Activated CD4-positive, alpha-beta T cell treated with anti-CD3 and anti-CD28 coated beads for 36 hours (primary cell): ENCODE measurements at regions of chr1 and their contacts with region 1.

Region 1: GRCh38 chr1:16677552-16678431 is 11.0 kb upstream of the RNU1-3 start:
- DNase-seq: peak; percentile 77
- ATAC-seq: peak; percentile 94
- H3K4me3 Mint-ChIP-seq: peak overlapping the region; percentile 50
- H3K27ac Mint-ChIP-seq: peak overlapping the region; percentile 58
- H3K4me1 Mint-ChIP-seq: peaks cover 26% of the 10 kb centered on the region
- H3K27me3 Mint-ChIP-seq: peaks cover 29% of the 10 kb centered on the region

Region 2: DNA sequence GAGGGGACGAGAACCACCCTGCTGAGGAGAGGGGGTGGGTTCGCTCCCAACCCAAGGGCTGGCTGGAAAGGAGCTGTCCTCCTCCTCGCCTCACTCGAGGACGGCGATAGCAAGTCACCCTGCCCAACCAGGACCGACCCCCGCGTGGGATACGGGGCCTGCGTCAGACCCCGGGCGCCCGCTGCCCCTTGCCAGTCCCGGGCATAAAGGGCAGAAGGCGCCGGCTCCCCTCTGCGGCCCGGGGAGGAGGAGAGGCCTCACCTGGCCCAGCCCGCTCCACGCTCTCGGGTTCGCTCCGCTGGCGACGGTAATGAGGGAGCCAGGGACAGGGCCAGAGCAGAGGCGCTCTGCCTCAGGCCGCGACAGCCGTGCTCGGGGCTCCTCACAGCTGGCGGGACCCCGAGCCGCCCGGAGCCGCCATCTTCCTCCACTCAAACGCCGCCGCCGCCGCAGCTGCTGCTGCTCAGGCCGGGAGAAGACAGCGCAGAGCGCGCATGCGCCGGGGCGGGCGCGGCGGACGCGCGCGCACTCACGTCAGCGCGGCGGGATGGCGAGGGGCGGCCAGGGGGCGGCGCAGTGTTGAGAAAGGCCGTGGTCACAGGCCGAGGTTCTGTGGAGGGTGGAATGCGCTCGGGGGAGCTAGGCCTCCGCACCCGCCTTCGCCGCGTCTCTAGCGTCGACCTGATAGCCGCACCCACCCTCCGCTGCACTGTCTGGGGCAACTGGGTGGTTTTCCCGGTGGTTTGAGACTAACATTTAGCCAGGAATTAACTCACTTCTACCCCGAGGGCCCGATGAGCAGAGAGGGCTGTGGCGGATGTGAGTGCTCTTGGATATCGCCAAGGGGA is 325.6 kb before region 1 on chr1 and contains the start of gene FBXO42:
- CTCF ChIA-PET with region 1: no interaction called
- POLR2A ChIA-PET with region 1: no interaction called
- intact Hi-C with region 1: no loop called
- DNase-seq: peak; percentile 95
- ATAC-seq: peak; percentile 92
- H3K4me3 Mint-ChIP-seq: peak within 1 kb of the TSS; percentile 96
- H3K27ac Mint-ChIP-seq: peak within 1 kb of the TSS; percentile 96
- H3K4me1 Mint-ChIP-seq: peaks cover 31% of the 10 kb centered on the region
- H3K27me3 Mint-ChIP-seq: no peaks in the 10 kb centered on the region
- total RNA-seq, gene FBXO42: 14.3 to 18.1 TPM

Region 3: GRCh38 chr1:16727190-16728111 is 49.7 kb after region 1 on chr1:
- CTCF ChIA-PET with region 1: no interaction called
- POLR2A ChIA-PET with region 1: no interaction called
- intact Hi-C with region 1: loop called in 1 of 2 experiments (anchors 10 kb)
- DNase-seq: peak; percentile 87
- ATAC-seq: peak; percentile 90
- H3K4me3 Mint-ChIP-seq: no peak overlapping the region
- H3K27ac Mint-ChIP-seq: no peak overlapping the region
- H3K4me1 Mint-ChIP-seq: no peaks in the 10 kb centered on the region
- H3K27me3 Mint-ChIP-seq: peaks cover 5% of the 10 kb centered on the region